Transverse colon (tissue), 4 donors: ENCODE measurements at regions of chrX and their contacts with region 1.

Region 1: GRCh38 chrX:110706446-110706845 is 89.2 kb downstream of the CHRDL1 start:
- DNase-seq: no peak
- H3K4me3 ChIP-seq: no peak overlapping the region
- H3K27ac ChIP-seq: no peak overlapping the region
- H3K4me1 ChIP-seq: no peaks in the 10 kb centered on the region
- H3K27me3 ChIP-seq: no peaks in the 10 kb centered on the region
- CTCF ChIP-seq: no peak
- EP300 ChIP-seq: no peak
- POLR2A ChIP-seq: no peak

Region 2: DNA sequence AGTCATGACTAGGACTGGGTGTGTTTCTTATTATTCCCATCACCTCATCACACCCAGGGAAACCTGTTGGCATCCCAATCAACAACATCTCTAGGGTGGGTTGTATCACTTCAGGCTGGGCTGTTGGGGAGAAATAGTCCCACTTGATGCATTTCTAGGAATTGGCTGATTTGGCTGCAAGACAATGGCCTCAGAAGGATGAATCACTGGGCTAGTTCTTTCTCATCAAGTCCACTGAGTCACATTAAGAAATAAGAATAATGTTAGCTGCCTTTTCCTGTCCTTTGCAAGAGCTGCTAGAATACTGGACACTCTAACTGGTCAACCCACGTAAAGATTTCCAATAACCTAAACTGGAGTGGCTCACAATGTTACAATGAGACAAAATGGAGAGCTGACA is 15.0 kb before region 1 on chrX:
- in situ Hi-C with region 1: no loop called
- intact Hi-C with region 1: no loop called
- DNase-seq: no peak
- H3K4me3 ChIP-seq: no peak overlapping the region
- H3K27ac ChIP-seq: no peak overlapping the region
- H3K4me1 ChIP-seq: no peaks in the 10 kb centered on the region
- H3K27me3 ChIP-seq: no peaks in the 10 kb centered on the region
- CTCF ChIP-seq: no peak
- EP300 ChIP-seq: no peak
- POLR2A ChIP-seq: no peak

Region 3: DNA sequence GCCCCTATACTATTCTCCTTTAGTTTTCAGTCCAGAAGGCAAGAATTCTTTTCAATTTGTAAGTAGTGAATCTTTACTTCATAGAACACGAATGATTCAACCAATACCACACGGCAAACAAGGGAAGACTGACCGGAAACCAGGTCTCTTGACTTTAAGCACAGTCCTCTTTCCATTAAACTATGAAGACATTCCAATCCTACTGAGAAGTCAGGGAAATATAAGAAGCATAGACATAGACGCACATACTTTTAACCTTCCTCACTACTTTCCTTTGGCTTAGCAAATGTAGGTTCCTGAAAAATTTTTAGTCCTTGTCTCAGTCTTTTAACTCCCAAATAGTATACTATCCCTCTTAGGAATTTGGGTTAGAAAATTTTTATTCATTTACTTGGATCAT is 80.0 kb after region 1 on chrX:
- in situ Hi-C with region 1: no loop called
- intact Hi-C with region 1: loop called (anchors 2 kb)
- DNase-seq: no peak
- H3K4me3 ChIP-seq: no peak overlapping the region
- H3K27ac ChIP-seq: no peak overlapping the region
- H3K4me1 ChIP-seq: no peaks in the 10 kb centered on the region
- H3K27me3 ChIP-seq: no peaks in the 10 kb centered on the region
- CTCF ChIP-seq: no peak
- EP300 ChIP-seq: no peak
- POLR2A ChIP-seq: no peak